ENCODE measurements at regions of chr12 and their contacts with region 1.

Region 1: GRCh38 chr12:88393017-88393767 is 187.1 kb downstream of the KITLG start:
- DNase-seq: no peak
- H3K4me3 Mint-ChIP-seq: no peak overlapping the region
- H3K27ac Mint-ChIP-seq: no peak overlapping the region
- H3K4me1 Mint-ChIP-seq: no peaks in the 10 kb centered on the region
- H3K27me3 Mint-ChIP-seq: no peaks in the 10 kb centered on the region

Region 2: DNA sequence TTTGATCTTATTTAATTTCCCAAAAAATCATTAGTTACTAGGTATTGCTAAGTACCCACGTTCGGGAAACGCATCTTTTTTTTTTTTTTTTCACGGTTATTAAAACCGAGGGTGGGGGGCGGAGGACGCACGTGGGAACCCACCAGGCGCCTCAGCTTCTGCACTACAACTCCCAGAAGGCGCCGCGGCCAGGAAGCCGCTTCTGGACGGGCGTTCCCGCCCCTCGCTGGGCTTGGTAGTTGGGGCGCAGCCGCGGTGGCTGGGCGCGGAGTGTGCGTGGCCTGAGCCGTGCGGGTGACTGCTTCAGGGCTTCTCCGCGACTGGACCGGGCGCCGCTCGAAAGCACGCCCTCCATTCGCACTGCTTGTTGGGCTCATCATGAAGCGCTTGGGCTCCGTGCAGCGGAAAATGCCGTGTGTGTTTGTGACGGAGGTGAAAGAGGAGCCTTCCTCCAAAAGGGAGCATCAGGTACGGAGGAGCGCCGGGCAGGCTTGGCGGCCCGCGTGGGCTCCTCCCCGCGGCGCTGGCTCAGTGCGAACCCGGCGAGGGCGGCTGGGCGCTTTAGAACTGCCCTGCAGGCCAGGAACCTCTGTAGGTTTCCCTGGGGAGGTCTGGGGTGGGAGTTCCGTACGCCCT is 357.8 kb before region 1 on chr12:
- CTCF ChIA-PET with region 1: no interaction called
- intact Hi-C with region 1: loop called (anchors 5 kb)
- DNase-seq: peak; percentile 89
- H3K4me3 Mint-ChIP-seq: peak overlapping the region; percentile 93
- H3K27ac Mint-ChIP-seq: peak overlapping the region; percentile 90
- H3K4me1 Mint-ChIP-seq: peaks cover 52% of the 10 kb centered on the region
- H3K27me3 Mint-ChIP-seq: no peaks in the 10 kb centered on the region

Region 3: DNA sequence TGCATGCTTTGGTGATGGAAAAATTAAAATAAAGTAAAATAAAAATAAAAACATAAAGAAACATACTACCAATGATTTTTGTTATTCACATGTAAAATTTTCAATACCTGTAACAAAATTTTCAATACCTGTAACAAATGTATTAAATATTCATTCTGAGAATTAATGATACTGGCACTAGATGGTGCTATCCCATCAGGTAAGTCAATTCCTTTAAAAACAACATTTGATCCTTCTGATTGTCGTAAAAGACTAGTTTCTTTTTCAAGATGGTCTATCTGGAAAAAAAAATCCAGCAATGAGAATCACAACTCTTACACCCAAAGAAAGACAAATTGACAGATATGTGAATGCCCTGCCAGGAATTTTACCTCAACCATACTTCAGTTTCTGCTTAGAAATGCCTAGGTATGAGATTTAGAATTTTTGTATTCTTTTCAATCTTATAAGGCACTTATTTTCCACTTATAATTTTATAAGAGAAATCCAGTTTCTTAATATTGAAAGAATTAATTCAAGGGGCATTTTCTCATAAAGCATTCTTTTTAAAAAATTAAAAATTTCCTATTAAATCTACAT is 282.0 kb before region 1 on chr12:
- CTCF ChIA-PET with region 1: interaction called, 3 read pairs
- intact Hi-C with region 1: loop called (anchors 1 kb)
- DNase-seq: no peak
- H3K4me3 Mint-ChIP-seq: no peak overlapping the region
- H3K27ac Mint-ChIP-seq: no peak overlapping the region
- H3K4me1 Mint-ChIP-seq: peaks cover 2% of the 10 kb centered on the region
- H3K27me3 Mint-ChIP-seq: no peaks in the 10 kb centered on the region

Region 4: GRCh38 chr12:88132390-88132789 is 260.8 kb before region 1 on chr12:
- CTCF ChIA-PET with region 1: no interaction called
- intact Hi-C with region 1: no loop called
- DNase-seq: no peak
- H3K4me3 Mint-ChIP-seq: no peak overlapping the region
- H3K27ac Mint-ChIP-seq: no peak overlapping the region
- H3K4me1 Mint-ChIP-seq: peaks cover 2% of the 10 kb centered on the region
- H3K27me3 Mint-ChIP-seq: no peaks in the 10 kb centered on the region

Region 5: DNA sequence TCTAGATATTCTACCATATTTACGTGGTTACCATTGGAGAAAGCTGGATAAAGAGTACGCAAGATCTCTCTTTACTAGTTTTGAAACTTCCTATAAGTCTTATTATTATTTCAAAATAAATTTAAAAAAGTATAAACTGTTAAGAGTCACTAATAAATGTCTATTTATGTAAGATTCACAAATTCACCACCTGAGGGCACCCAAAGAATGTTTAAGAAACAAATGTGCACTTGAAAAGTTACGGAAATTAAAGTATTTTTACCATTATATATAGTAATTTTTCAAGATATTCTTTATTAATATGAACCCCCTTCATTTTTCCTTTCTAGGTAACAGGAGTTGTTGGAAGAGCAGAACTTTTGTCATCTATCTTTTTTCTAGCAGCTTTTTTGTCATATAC is 239.2 kb before region 1 on chr12:
- CTCF ChIA-PET with region 1: interaction called, 4 read pairs
- intact Hi-C with region 1: loop called (anchors 1 kb)
- DNase-seq: no peak
- H3K4me3 Mint-ChIP-seq: no peak overlapping the region
- H3K27ac Mint-ChIP-seq: no peak overlapping the region
- H3K4me1 Mint-ChIP-seq: peaks cover 24% of the 10 kb centered on the region
- H3K27me3 Mint-ChIP-seq: no peaks in the 10 kb centered on the region

Region 6: DNA sequence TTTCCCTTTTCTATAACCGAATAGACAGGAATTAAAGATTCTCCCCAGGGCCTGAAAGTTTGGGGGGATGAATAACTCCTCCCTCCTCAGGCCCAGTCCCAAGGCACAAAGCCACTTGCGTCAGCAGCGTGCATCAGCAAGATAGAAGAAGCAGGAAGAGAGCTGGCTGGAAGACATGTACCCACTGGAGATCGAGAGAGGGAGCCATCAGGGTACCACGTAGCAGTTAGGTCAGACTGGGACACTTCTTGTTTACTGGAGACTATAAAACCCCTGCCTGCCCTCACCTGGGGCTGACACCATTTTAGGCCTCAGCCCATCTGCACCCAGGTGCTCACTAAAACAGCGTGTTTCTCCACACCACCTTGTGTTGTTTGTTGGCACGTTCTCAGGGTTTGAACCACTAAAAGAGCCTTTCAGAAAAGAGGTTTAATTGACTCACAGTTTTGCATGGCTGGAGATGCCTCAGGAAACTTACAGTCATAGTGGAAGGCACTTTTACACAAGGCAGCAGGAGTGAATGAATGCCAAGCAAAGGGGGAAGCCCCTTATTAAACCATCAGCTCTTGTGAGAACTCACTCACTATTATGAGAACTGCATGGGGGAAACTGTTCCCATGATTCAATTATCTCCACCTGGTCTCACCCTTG is 157.9 kb before region 1 on chr12:
- CTCF ChIA-PET with region 1: no interaction called
- intact Hi-C with region 1: loop called (anchors 1 kb)
- DNase-seq: peak; percentile 65
- H3K4me3 Mint-ChIP-seq: no peak overlapping the region
- H3K27ac Mint-ChIP-seq: no peak overlapping the region
- H3K4me1 Mint-ChIP-seq: peaks cover 29% of the 10 kb centered on the region
- H3K27me3 Mint-ChIP-seq: peaks cover 4% of the 10 kb centered on the region

Region 7: DNA sequence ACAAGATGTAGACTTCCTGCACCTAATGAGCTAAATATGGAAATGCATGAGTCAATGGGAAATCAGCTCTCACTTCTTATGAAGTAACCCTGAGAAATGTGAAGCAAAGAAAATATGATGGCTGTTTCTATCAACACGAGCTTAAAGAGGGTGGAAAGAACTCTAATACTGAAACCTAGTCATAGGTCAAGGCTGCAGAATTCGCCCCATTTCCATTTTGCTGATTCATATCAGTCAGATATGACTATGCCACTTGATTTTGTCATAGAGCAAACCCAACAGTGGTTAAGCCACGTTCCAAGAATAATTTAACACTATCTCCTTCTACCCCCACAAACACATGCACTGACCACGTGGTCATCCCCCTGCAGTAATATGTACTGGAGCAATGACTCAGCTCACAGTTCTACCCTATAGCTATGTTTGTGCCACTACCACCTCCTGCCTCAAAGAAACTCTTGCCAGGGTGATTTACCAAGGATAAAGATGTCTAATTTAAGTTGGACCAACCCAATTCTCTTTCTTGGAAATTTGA is 93.6 kb before region 1 on chr12:
- CTCF ChIA-PET with region 1: no interaction called
- intact Hi-C with region 1: loop called (anchors 1 kb)
- DNase-seq: peak; percentile 50
- H3K4me3 Mint-ChIP-seq: no peak overlapping the region
- H3K27ac Mint-ChIP-seq: peak overlapping the region; percentile 9
- H3K4me1 Mint-ChIP-seq: peaks cover 17% of the 10 kb centered on the region
- H3K27me3 Mint-ChIP-seq: peaks cover 5% of the 10 kb centered on the region

Measured in activated naive CD4-positive, alpha-beta T cell treated with anti-CD3 and anti-CD28 coated beads for 36 hours (primary cell).